ENCODE measurements at regions of chr5 and their contacts with region 1.

Region 1: DNA sequence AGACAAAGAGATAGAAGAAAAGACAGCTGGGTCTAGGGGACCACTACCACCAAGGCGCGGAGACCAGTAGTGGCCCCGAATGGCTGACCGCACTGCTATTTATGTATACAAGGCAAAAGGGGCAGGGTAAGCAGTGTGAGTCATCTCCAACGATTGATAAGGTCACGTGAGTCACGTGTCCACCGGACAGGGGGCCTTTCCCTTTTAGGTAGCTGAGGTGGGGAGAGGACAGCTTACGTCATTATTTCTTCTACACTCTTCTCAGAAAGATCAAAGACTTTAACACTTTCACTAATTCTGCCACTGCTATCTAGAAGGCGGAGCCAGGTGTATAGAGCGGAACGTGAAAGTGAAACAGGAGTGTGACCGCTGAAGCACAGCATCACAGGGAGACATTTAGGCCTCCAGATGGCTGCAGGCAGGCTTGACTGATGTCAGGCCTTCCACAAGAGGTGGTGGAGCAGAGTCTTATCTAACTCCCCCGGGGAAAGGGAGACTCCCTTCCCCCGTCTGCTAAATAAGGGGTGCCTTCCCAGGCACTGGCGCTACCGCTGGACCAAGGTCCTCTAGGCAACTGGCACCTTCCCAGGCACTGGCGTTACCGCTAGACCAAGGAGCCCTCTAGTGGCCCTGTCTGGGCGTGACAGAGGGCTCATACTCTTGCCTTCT is 6.1 kb upstream of the PRR16 start:
- DNase-seq: peak; percentile 76
- H3K4me3 ChIP-seq: peak overlapping the region; percentile 55
- H3K27ac ChIP-seq: no peak overlapping the region
- H3K4me1 ChIP-seq: peaks cover 17% of the 10 kb centered on the region
- H3K27me3 ChIP-seq: no peaks in the 10 kb centered on the region

Region 2: DNA sequence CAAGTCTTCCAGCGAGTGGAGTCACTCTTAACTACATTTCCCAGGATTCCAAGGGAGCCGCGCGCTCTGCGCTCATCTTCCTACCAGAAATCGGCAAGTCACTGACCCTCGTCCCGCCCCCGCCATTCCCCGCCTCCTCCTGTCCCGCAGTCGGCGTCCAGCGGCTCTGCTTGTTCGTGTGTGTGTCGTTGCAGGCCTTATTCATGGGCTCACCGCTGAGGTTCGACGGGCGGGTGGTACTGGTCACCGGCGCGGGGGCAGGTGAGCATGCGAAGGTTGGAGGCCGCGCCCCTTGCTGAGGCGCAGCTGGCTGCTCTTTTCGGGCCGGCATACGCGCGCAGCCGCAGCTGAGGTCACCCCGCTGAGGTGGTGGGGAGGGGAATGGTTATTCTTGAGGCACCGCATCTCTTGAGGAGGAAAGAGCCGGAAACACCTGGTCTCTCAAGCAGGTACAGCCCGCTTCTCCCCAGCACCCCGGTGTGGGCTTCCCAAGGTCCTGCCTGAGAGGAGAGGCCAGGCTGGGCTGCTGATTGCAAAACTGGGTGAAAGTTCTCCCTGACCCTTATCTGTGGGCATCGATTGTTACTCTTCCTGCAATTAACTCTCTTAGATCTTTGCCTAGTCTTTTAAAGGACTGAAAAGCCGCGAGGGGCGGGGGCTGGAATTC is 1005.5 kb before region 1 on chr5 and contains the start of gene HSD17B4:
- in situ Hi-C with region 1: loop called (anchors 25 kb)
- DNase-seq: peak; percentile 90
- H3K4me3 ChIP-seq: peak within 1 kb of the TSS; percentile 95
- H3K27ac ChIP-seq: peak within 1 kb of the TSS; percentile 33
- H3K4me1 ChIP-seq: no peaks in the 10 kb centered on the region
- H3K27me3 ChIP-seq: no peaks in the 10 kb centered on the region
- total RNA-seq, gene HSD17B4: 55.8 and 556 TPM in 2 replicates

Region 3: GRCh38 chr5:119966028-119966427 is 491.9 kb before region 1 on chr5:
- in situ Hi-C with region 1: loop called (anchors 25 kb)
- DNase-seq: peak; percentile 37
- H3K4me3 ChIP-seq: no peak overlapping the region
- H3K27ac ChIP-seq: no peak overlapping the region
- H3K4me1 ChIP-seq: no peaks in the 10 kb centered on the region
- H3K27me3 ChIP-seq: no peaks in the 10 kb centered on the region

Region 4: DNA sequence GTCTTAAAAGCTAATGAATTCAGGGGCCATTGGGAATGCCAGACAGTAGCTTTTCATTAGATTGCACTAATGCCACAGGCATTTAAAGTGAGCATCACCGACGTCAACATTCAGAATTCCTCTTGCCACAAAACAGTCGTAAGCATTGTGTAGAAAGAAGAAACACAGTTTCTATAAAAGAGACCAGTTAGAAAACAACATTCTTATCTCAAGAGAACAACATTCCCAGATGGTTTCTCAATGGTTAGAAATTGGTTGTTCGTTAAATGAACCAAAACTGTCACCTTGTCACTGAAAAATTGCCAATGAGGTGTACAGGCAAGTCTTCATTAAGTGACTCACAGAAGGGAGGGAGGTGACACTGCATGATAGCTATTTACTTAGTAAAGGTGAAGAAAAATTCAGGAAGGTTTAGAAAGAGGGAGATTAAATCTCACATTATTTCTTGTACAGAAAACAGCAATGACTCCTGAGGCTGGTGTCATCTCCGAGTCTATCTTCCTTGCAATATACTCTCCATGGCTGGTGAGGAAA is 395.4 kb before region 1 on chr5:
- in situ Hi-C with region 1: loop called (anchors 10 kb)
- DNase-seq: peak; percentile 31
- H3K4me3 ChIP-seq: no peak overlapping the region
- H3K27ac ChIP-seq: no peak overlapping the region
- H3K4me1 ChIP-seq: no peaks in the 10 kb centered on the region
- H3K27me3 ChIP-seq: no peaks in the 10 kb centered on the region

Region 5: GRCh38 chr5:120124961-120125360 is 333.0 kb before region 1 on chr5:
- in situ Hi-C with region 1: no loop called
- DNase-seq: peak; percentile 26
- H3K4me3 ChIP-seq: no peak overlapping the region
- H3K27ac ChIP-seq: no peak overlapping the region
- H3K4me1 ChIP-seq: no peaks in the 10 kb centered on the region
- H3K27me3 ChIP-seq: no peaks in the 10 kb centered on the region

Measured in GM23248 (cell line).